Cardiac septum (tissue), 1 donor: ENCODE measurements at regions of chr1 and their contacts with region 1.

Region 1: GRCh38 chr1:67685067-67685557 is at the start of gene GADD45A:
- DNase-seq: peak; percentile 100
- total RNA-seq, gene GADD45A: 94.9 TPM

Region 2: GRCh38 chr1:67561704-67562113 is 123.4 kb before region 1 on chr1:
- intact Hi-C with region 1: loop called (anchors 2 kb)
- DNase-seq: peak; percentile 94

Region 3: GRCh38 chr1:67646145-67647035 is 38.7 kb before region 1 on chr1:
- intact Hi-C with region 1: loop called (anchors 5 kb)
- DNase-seq: no peak

Region 4: GRCh38 chr1:67748630-67749029 is 63.5 kb after region 1 on chr1:
- intact Hi-C with region 1: loop called (anchors 2 kb)
- DNase-seq: no peak

Region 5: DNA sequence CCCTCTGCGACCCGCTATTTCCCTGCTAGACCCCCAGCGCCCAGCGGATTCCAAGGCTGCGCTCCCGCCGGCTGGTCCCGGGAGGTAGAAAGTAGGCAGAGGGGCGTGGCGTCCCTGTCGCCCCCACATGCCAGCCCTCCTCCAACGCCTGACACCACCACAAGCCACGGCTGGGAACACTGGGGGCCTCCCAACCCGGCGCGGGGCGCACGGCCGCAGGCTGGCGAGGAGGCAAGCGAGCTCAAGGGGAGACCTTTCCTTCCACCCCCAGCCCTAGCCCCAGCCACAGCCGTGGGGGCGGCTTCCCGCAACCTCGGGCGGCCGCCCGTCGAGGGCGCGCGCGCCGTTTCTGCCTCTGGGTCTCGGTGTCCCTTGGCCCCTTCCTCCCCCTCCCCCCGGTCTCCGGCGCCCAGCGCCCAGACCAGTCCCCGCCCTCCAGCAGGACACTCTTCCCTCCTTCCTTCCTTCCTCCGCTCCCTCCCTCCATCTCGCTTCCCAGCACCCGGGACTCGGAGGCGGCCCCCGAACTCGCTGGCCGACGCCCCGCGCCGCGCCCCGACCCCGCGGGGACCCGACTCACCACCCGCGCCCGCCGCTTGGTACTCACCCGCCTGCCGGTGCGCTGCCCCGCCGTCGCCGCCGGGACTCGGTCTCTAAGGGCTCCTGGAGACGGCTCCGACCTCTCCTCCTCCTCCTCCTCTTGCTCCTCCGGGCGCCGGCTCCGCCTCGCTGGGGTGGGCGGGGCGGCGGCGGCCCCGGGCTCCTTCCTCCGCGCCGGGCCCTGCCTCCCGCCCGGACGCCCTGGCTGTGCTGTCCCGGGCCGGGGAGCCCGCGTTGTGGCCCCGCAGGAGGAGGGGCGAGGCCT is 147.9 kb after region 1 on chr1 and contains the start of gene GNG12:
- intact Hi-C with region 1: loop called (anchors 5 kb)
- DNase-seq: peak; percentile 81
- total RNA-seq, gene GNG12: 38.8 TPM